Aorta (tissue), 5 donors: ENCODE measurements at regions of chr11 and their contacts with region 1.

Region 1: DNA sequence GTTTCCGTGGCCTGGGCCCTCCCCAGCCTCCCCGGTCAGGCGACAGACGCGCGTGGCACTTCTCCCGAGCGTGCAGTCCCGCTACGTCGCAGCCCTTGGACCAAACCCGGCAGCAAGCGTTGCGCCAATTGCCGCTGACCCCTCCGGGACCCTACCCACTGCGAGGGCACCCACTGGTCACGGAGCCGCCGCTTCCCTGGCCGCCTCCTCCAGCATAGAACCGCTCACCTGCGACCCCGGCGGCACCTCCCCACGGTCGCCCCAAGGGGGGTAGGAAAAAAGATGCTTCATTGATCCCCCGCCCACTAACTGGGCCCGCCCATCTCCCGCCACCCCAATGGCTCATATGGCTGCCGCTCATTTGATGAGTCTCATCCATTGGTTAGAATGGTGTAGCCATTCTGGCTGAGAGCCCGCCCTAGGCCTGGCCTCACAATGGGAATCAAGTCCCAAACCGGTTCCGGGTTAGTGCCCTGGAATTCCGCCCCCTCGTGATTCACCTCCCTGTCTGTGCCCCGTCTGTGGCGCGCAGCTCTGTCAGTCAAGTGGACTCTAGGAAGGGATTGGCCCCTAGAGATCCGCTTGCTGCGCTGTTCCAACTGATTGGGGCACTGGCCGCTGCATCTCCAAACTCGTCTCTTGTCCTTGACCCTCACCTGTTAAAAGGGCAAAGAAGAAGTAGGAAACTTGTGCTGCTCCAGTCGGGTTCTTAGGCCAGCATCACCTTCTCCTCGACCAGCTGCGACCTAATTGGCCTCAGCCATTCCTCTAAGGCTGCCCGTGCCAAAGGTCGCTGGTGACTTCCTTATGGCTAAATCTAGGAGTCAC is at the start of gene MSANTD4:
- DNase-seq: peak; percentile 99 to 100
- ATAC-seq: peak; percentile 99
- H3K4me3 ChIP-seq: peak within 1 kb of the TSS; percentile 69 to 83
- H3K27ac ChIP-seq: peak within 1 kb of the TSS in 1 of 2 donors; percentile 53
- H3K4me1 ChIP-seq: peaks cover 0 to 3% of the 10 kb centered on the region in 2 donors
- H3K27me3 ChIP-seq: no peaks in the 10 kb centered on the region
- total RNA-seq, gene MSANTD4: 18.4 to 21.6 TPM

Region 2: DNA sequence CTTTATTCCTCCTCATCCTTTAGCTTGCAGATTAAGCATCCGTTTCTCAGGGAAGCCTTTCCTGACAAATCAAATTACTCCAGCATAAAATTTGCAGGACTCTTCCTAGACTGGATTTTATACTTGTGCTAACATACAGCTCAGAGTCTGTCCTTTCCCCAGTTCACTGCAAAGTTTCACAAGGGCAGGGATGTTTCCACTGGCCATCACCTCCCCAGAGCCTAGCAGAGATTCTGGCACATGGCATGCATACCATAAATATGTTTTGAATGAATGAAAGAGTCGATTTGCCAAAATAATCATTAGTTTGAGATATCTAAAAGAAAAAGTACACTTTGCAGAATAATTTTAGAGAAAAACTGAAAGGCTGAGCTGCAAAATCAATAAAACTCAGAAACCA is 10.7 kb before region 1 on chr11:
- intact Hi-C with region 1: no loop called
- DNase-seq: no peak
- ATAC-seq: no peak
- H3K4me3 ChIP-seq: no peak overlapping the region
- H3K27ac ChIP-seq: no peak overlapping the region
- H3K4me1 ChIP-seq: peaks cover 2 to 8% of the 10 kb centered on the region in 2 donors
- H3K27me3 ChIP-seq: no peaks in the 10 kb centered on the region

Region 3: GRCh38 chr11:106076919-106077608 is 54.9 kb after region 1 on chr11 and contains the start of gene KBTBD3:
- intact Hi-C with region 1: loop called (anchors 1 to 5 kb)
- DNase-seq: peak; percentile 99
- ATAC-seq: peak; percentile 99
- H3K4me3 ChIP-seq: peak within 1 kb of the TSS; percentile 58 to 59
- H3K27ac ChIP-seq: peak within 1 kb of the TSS; percentile 64 to 98
- H3K4me1 ChIP-seq: peaks cover 0 to 2% of the 10 kb centered on the region in 2 donors
- H3K27me3 ChIP-seq: no peaks in the 10 kb centered on the region
- total RNA-seq, gene KBTBD3: 9.7 to 9.9 TPM